Mammary epithelial cell (primary cell): ENCODE measurements at regions of chr6 and their contacts with region 1.

Region 1: GRCh38 chr6:17057322-17057721 is 44.5 kb upstream of the STMND1 start:
- DNase-seq: peak; percentile 80
- H3K4me3 ChIP-seq: no peak overlapping the region
- H3K27ac ChIP-seq: peak overlapping the region; percentile 31
- H3K4me1 ChIP-seq: peaks cover 33% of the 10 kb centered on the region
- H3K27me3 ChIP-seq: no peaks in the 10 kb centered on the region
- CTCF ChIP-seq: no peak

Region 2: GRCh38 chr6:17012421-17013225 is 44.7 kb before region 1 on chr6:
- CTCF ChIA-PET with region 1: no interaction called
- dilution Hi-C with region 1: no loop called
- in situ Hi-C with region 1: no loop called
- intact Hi-C with region 1: loop called (anchors 5 kb)
- DNase-seq: peak; percentile 16
- H3K4me3 ChIP-seq: no peak overlapping the region
- H3K27ac ChIP-seq: no peak overlapping the region
- H3K4me1 ChIP-seq: peaks cover 11% of the 10 kb centered on the region
- H3K27me3 ChIP-seq: no peaks in the 10 kb centered on the region
- CTCF ChIP-seq: peak; percentile 3 to 26

Region 3: GRCh38 chr6:17032988-17033634 is 24.2 kb before region 1 on chr6:
- CTCF ChIA-PET with region 1: no interaction called
- dilution Hi-C with region 1: no loop called
- in situ Hi-C with region 1: no loop called
- intact Hi-C with region 1: loop called (anchors 2 kb)
- DNase-seq: peak; percentile 89
- H3K4me3 ChIP-seq: peak overlapping the region in 1 of 3 experiments; percentile 12
- H3K27ac ChIP-seq: peak overlapping the region; percentile 78
- H3K4me1 ChIP-seq: peaks cover 20% of the 10 kb centered on the region
- H3K27me3 ChIP-seq: no peaks in the 10 kb centered on the region
- CTCF ChIP-seq: no peak